ENCODE measurements at regions of chr14 and their contacts with region 1.

Region 1: DNA sequence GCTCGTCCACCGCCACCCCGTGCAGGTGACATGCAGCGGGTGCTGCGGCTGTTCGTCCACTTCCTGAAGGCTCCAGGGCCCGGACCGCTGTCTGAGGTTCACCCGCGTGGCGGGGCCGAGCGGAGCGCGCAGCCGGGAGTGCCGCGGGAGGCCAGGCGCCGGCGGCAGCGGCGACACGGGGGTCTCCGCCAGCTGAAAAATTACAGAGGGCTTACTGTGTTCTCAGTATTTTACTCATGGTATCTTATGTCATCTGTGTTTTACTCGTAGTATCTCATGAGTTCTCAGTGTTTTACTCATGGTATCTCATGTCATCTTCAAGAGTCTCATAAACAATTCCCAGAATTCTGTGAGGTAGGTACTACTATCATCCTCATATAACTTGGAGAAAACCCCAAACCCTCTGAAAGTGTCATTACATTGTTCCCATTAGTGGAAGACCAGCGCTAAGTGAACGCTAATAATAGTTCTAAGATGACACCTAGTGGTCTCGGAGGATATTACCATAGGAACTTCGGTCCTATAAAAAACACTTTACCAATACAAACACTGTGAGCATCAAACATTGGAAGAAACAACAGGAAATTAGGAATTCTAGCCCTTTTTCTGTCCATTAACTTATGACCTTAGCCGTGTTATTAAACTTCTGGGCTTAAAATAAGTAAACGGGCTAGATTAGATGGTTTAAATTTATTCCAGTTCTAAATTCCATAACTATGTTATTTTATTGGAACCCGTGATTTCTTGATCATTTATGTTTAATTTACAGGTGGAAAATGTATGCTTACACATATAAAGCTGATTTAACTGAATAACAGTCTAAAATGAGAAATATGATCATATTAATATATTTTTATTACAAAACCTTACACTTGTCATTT is 32.4 kb downstream of the AK7 start:
- DNase-seq: peak; percentile 39
- ATAC-seq: peak; percentile 88
- H3K4me3 Mint-ChIP-seq: peak overlapping the region; percentile 79
- H3K27ac Mint-ChIP-seq: no peak overlapping the region
- H3K4me1 Mint-ChIP-seq: peaks cover 21% of the 10 kb centered on the region
- H3K27me3 Mint-ChIP-seq: peaks cover 2% of the 10 kb centered on the region
- CTCF ChIP-seq: peak; percentile 70

Region 2: DNA sequence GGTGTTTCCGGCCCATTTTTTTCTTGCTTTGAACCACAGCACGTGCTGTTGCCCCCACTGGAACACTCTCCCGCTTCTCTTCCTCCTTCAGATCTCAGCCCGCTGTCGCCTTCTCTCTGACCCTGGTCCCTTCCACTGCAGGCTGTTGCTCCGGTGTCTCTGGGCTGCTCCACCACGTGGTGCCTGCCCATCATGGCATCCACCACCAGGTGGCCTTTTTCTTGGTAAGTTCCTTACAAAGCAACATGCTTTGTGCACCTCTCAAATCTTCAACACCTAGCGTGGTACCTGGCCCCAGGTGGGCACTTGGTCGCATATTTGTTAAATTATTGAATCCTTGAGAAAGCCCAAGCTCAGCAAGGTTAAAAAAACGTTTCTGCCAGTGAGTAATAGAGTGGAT is 528.6 kb before region 1 on chr14:
- CTCF ChIA-PET with region 1: no interaction called
- POLR2A ChIA-PET with region 1: no interaction called
- intact Hi-C with region 1: loop called (anchors 10 kb)
- DNase-seq: no peak
- ATAC-seq: no peak
- H3K4me3 Mint-ChIP-seq: no peak overlapping the region
- H3K27ac Mint-ChIP-seq: no peak overlapping the region
- H3K4me1 Mint-ChIP-seq: peaks cover 2% of the 10 kb centered on the region
- H3K27me3 Mint-ChIP-seq: peaks cover 18% of the 10 kb centered on the region
- CTCF ChIP-seq: no peak

Region 3: GRCh38 chr14:96100161-96101029 is 324.0 kb before region 1 on chr14:
- CTCF ChIA-PET with region 1: no interaction called
- POLR2A ChIA-PET with region 1: no interaction called
- intact Hi-C with region 1: loop called (anchors 2 kb)
- DNase-seq: no peak
- ATAC-seq: no peak
- H3K4me3 Mint-ChIP-seq: no peak overlapping the region
- H3K27ac Mint-ChIP-seq: no peak overlapping the region
- H3K4me1 Mint-ChIP-seq: peaks cover 2% of the 10 kb centered on the region
- H3K27me3 Mint-ChIP-seq: no peaks in the 10 kb centered on the region
- CTCF ChIP-seq: no peak

Region 4: GRCh38 chr14:96341323-96341722 is 83.0 kb before region 1 on chr14:
- CTCF ChIA-PET with region 1: no interaction called
- POLR2A ChIA-PET with region 1: no interaction called
- intact Hi-C with region 1: loop called (anchors 5 kb)
- DNase-seq: no peak
- ATAC-seq: no peak
- H3K4me3 Mint-ChIP-seq: no peak overlapping the region
- H3K27ac Mint-ChIP-seq: no peak overlapping the region
- H3K4me1 Mint-ChIP-seq: no peaks in the 10 kb centered on the region
- H3K27me3 Mint-ChIP-seq: no peaks in the 10 kb centered on the region
- CTCF ChIP-seq: no peak

Region 5: DNA sequence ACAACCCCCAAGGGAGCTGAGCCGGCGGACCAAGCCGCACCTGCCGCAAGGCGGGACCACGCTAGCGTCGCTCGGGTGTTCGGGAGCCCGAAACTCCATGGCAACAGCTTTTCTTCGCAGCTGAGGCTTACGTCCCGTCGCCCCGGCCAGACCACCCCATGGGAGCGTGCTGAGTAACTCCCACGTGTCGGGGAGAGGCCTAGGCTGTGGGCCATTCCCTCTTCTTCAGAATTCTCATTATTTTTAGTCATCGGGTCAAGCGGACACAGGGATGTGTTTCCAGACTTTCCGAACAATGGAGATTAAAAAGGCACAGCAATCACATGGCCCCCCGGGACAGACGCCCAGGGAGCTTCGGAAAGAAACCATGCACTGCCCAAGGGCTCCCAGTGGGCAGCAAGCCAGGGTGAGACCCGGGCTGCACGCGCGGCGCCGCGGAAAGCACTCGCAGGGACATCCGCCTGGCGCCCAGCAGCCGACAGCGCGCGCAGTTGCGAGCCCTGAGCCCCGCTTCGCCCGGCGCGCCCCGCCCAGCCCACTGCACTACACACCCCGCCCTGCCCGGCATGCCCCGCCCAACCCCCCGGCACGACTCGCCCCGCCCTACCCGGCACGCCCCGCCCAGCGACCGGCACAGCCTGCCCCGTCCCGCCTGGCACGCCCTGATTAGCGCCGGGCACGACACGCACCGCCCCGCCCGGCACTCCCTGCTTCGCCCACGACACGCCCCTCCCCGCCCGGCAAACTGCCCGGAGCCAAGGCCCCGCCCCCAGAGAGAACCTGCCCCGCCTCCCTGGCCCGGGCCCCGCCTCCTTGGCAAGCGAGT is 32.8 kb before region 1 on chr14:
- CTCF ChIA-PET with region 1: no interaction called
- POLR2A ChIA-PET with region 1: no interaction called
- intact Hi-C with region 1: loop called (anchors 2 kb)
- DNase-seq: peak; percentile 100
- ATAC-seq: peak; percentile 93
- H3K4me3 Mint-ChIP-seq: peak overlapping the region; percentile 91
- H3K27ac Mint-ChIP-seq: peak overlapping the region; percentile 88
- H3K4me1 Mint-ChIP-seq: peaks cover 6% of the 10 kb centered on the region
- H3K27me3 Mint-ChIP-seq: peaks cover 3% of the 10 kb centered on the region
- CTCF ChIP-seq: no peak

Region 6: DNA sequence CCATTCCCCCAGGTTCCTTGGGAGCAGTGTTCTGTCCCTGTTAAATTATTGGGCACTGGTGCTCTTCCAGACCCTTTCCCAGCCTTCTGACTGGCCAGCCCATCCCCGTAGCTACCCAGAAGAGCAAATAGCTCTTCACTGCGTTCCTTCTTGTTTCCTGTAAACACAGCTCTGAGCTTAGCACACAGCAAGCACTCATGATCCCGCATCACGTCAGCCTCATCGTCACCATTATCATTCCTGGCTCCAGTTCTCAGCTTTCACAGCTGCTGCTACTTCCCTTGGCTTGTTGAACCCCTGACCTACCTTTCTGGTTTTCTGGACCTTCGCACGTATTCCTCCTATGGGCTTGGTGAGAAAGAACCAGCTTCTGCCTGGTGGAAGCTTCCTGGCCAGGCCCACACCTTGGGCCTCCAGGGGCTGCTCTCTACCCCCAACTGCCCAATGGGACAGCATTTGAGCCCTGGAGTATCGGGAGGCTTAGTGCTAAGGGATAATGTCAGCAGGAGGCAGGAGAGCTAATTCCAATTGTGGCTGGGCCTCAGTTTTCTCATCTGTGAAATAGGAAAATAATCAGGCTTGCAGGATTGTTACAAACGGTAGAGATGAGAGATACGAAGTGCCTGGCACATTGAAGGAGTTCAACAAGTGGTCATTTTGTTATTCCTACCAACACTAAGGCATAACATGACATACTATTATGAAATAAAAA is 55.2 kb after region 1 on chr14:
- CTCF ChIA-PET with region 1: no interaction called
- POLR2A ChIA-PET with region 1: no interaction called
- intact Hi-C with region 1: no loop called
- DNase-seq: no peak
- ATAC-seq: no peak
- H3K4me3 Mint-ChIP-seq: no peak overlapping the region
- H3K27ac Mint-ChIP-seq: no peak overlapping the region
- H3K4me1 Mint-ChIP-seq: peaks cover 4% of the 10 kb centered on the region
- H3K27me3 Mint-ChIP-seq: no peaks in the 10 kb centered on the region
- CTCF ChIP-seq: no peak